Left cardiac atrium (tissue), 4 donors: ENCODE measurements at regions of chr2 and their contacts with region 1.

Region 1: GRCh38 chr2:27095745-27096651 is 9.4 kb downstream of the KHK start:
- DNase-seq: peak; percentile 72
- ATAC-seq: peak; percentile 84 to 88

Region 2: DNA sequence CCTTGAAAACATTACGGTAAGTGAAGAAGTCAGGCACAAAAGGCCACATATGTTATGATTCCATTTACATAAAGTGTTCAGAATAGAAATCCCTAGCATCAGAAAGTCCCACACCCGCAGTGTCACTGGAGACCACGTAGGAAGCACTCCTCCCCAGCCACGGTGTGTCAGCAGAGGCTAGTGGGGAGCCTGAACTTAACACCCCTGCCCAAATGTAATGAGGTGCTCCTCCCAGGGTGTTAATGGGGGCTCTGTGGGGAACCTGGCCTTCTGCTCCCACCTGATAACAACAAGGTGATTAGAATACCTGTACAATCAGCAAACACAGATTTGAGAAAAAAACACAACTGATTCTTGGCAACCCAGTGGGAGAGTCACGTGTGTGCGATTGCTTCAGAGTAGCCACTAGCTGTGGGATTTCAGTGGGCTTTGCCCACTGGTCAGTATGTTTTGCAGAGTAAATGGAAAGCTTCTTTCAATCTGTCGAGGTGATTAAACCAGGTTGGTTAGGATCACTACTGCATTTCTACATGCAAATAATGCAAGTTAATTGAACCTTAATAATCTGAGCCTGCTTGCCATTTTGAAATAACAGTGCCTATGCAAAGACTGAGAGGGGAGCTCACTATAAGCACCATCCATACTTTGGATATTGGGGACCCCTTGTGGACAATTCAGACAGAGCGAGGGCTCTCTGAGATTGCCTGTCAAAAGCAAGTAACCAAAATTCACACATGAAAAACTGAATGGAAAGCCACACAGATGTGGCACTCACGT is 95.2 kb after region 1 on chr2:
- intact Hi-C with region 1: loop called (anchors 1 to 5 kb)
- DNase-seq: peak; percentile 36
- ATAC-seq: peak; percentile 80 to 90

Region 3: GRCh38 chr2:27281855-27282559 is 186.0 kb after region 1 on chr2 and contains the start of gene TRIM54:
- intact Hi-C with region 1: loop called in 1 of 2 experiments (anchors 10 kb)
- DNase-seq: no peak
- ATAC-seq: peak; percentile 84 to 89
- total RNA-seq, gene TRIM54: 92.1 to 105 TPM

Region 4: GRCh38 chr2:28206762-28207161 is 1110.8 kb after region 1 on chr2:
- intact Hi-C with region 1: no loop called
- DNase-seq: no peak
- ATAC-seq: no peak